ENCODE measurements at regions of chr4 and their contacts with region 1.

Region 1: DNA sequence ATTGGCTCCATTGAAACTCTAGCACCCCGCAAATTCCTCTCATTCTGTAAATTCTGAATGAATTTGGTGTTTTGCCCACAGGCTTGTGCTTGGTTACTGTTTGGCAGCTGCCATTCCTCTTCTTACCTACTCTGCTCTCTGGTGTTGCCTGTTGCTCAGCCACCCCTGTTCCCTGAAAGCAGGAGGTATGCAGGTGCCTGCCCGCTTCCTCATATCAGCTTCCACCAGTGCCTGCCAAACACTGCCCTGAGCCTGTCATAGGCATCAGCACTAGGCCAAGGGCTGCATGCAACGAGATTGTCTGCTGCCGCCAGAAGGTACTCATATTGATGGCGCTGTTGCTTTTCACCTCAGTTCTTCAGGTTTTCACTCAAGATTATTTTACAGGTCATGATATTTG is 978.1 kb downstream of the C4orf33 start:
- DNase-seq: no peak
- ATAC-seq: no peak
- H3K4me3 ChIP-seq: no peak overlapping the region
- H3K27ac ChIP-seq: no peak overlapping the region
- H3K4me1 ChIP-seq: no peaks in the 10 kb centered on the region
- H3K27me3 ChIP-seq: peaks cover 0 to 2% (median 0%) of the 10 kb centered on the region in 7 donors
- CTCF ChIP-seq: no peak

Region 2: DNA sequence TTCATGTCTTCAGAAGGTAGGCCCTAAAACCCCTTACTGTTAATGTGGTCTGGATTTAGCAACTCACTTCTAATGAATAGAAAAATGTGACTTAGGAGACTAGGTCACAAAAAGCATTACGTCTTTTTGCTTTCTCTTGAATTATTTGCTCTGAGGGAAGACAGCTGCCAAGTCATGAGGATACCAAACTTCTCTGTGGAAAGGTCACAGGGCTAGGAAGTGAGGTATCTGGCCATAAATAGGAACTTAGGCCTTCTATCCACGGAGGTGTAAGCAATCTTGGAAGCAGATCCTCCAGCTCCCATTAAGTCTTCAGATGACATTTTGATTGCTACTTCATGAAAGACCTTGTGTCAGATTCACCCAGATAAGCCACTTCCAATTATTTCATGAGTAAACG is 1144.0 kb before region 1 on chr4:
- intact Hi-C with region 1: loop called in 1 of 10 experiments (anchors 5 kb)
- DNase-seq: no peak
- ATAC-seq: no peak
- H3K4me3 ChIP-seq: no peak overlapping the region
- H3K27ac ChIP-seq: no peak overlapping the region
- H3K4me1 ChIP-seq: peaks cover 0 to 10% (median 0%) of the 10 kb centered on the region in 9 donors
- H3K27me3 ChIP-seq: no peaks in the 10 kb centered on the region
- CTCF ChIP-seq: no peak